ENCODE measurements at regions of chr14 and their contacts with region 1.

Region 1: DNA sequence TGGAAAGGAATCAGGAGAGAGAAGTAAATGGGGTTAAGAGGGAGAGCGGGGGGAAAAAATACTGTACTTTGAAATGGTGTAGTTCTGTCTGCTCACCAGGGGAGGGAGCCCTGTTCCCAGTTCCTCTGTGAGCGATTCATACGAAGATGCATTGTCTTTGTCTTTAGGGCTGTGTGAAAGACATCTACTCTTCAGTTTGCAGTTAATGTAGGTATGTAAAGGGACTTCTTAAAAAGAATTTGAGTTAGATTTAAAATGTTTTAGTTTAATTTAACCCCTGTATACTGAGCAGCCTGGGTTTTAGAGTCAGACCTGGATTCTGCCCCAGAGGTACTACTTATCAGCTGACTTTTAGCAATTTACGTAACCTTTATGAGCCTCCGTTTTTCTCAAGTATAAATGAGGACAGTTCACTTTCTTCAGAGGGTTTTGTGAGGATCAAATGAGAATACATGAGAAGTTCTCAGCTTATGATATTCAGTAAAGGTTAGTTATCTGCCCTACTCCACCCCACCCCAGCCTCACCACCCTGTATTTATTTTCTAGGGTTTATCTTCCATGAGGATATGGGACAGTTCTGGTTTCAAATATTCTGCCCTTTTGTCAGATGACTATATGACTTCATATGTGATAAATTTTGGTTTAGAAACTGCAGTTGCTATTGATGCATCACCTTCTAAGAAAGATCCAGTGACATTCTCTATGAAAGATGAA is 82.5 kb upstream of the EVL start:
- DNase-seq: peak; percentile 78
- ATAC-seq: peak; percentile 87
- H3K4me3 Mint-ChIP-seq: no peak overlapping the region
- H3K27ac Mint-ChIP-seq: no peak overlapping the region
- H3K4me1 Mint-ChIP-seq: peaks cover 22% of the 10 kb centered on the region
- H3K27me3 Mint-ChIP-seq: no peaks in the 10 kb centered on the region

Region 2: DNA sequence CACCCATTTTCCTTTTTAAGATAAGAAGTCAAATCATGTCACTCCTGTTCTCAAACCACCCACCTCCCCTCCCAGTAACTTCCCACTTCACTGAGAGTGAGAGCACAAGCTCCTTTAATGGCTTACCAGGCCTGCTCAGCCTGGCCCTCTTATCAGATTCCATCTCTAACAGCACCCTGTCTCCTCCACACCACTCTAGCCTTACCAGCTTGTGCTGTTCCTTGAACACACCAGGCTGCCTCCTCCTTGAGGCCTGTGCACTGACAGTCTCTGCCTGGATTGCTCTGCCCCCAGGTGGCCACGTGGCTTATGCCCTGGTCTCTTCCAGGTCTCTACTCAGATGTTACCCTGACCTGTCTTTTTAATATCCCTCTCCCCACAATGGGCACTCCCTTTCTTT is 42.4 kb after region 1 on chr14:
- CTCF ChIA-PET with region 1: interaction called, 36 read pairs
- POLR2A ChIA-PET with region 1: no interaction called
- DNase-seq: peak; percentile 59
- ATAC-seq: peak; percentile 89
- H3K4me3 Mint-ChIP-seq: no peak overlapping the region
- H3K27ac Mint-ChIP-seq: no peak overlapping the region
- H3K4me1 Mint-ChIP-seq: peaks cover 10% of the 10 kb centered on the region
- H3K27me3 Mint-ChIP-seq: peaks cover 2% of the 10 kb centered on the region

Region 3: GRCh38 chr14:100078991-100079725 is 96.5 kb after region 1 on chr14:
- CTCF ChIA-PET with region 1: interaction called, 38 read pairs
- POLR2A ChIA-PET with region 1: interaction called, 5 read pairs
- DNase-seq: peak; percentile 94
- ATAC-seq: peak; percentile 83
- H3K4me3 Mint-ChIP-seq: peak overlapping the region; percentile 91
- H3K27ac Mint-ChIP-seq: peak overlapping the region; percentile 93
- H3K4me1 Mint-ChIP-seq: peaks cover 97% of the 10 kb centered on the region
- H3K27me3 Mint-ChIP-seq: no peaks in the 10 kb centered on the region

Region 4: GRCh38 chr14:100203949-100204834 is 221.5 kb after region 1 on chr14:
- CTCF ChIA-PET with region 1: no interaction called
- POLR2A ChIA-PET with region 1: no interaction called
- DNase-seq: no peak
- ATAC-seq: no peak
- H3K4me3 Mint-ChIP-seq: no peak overlapping the region
- H3K27ac Mint-ChIP-seq: no peak overlapping the region
- H3K4me1 Mint-ChIP-seq: no peaks in the 10 kb centered on the region
- H3K27me3 Mint-ChIP-seq: peaks cover 2% of the 10 kb centered on the region

Region 5: GRCh38 chr14:100221533-100222223 is 239.0 kb after region 1 on chr14:
- CTCF ChIA-PET with region 1: interaction called, 10 read pairs
- POLR2A ChIA-PET with region 1: interaction called, 3 read pairs
- DNase-seq: peak; percentile 86
- ATAC-seq: peak; percentile 94
- H3K4me3 Mint-ChIP-seq: no peak overlapping the region
- H3K27ac Mint-ChIP-seq: no peak overlapping the region
- H3K4me1 Mint-ChIP-seq: peaks cover 16% of the 10 kb centered on the region
- H3K27me3 Mint-ChIP-seq: no peaks in the 10 kb centered on the region

Measured in activated CD8-positive, alpha-beta T cell treated with anti-CD3 and anti-CD28 coated beads, Interleukin-2, amount 10 ng/mL, durations not matched to agents 7 days and 5 days (primary cell).